ENCODE measurements at regions of chr3 and their contacts with region 1.

Region 1: GRCh38 chr3:100590114-100590839 is 19.1 kb upstream of the ADGRG7 start:
- DNase-seq: peak; percentile 68
- ATAC-seq: peak; percentile 95
- H3K4me3 ChIP-seq: no peak overlapping the region
- H3K27ac ChIP-seq: no peak overlapping the region
- H3K4me1 ChIP-seq: no peaks in the 10 kb centered on the region
- H3K27me3 ChIP-seq: no peaks in the 10 kb centered on the region
- CTCF ChIP-seq: peak; percentile 77 to 91 (median 80); a peak in 5 of 6 replicates
- EP300 ChIP-seq: no peak
- POLR2A ChIP-seq: no peak
- RAD21 ChIP-seq: peak; percentile 95

Region 2: DNA sequence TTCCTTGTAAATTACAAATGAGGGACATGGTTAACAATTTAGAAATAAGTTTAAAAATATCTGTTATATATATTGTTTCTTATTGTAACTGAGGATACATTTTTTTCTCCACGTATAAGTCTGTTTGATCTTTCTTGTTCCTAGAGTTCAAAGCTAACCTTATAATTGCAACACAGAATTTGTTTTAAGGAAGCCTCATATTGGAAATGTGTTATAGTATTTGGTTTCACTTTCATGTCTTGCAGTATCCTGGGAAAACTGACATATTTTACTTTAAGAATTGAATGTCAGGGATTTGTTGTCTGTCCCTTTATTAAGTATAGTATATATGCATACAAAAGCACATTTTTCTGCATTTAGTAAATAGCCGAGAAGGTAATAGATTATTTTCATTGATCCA is 279.3 kb before region 1 on chr3:
- CTCF ChIA-PET with region 1: interaction called, 33 read pairs
- POLR2A ChIA-PET with region 1: no interaction called
- RAD21 ChIA-PET with region 1: interaction called, 32 read pairs
- SMC1A ChIA-PET with region 1: interaction called, 18 read pairs
- in situ Hi-C with region 1: loop called (anchors 5 kb)
- intact Hi-C with region 1: loop called (anchors 1 kb)
- DNase-seq: no peak
- ATAC-seq: no peak
- H3K4me3 ChIP-seq: no peak overlapping the region
- H3K27ac ChIP-seq: no peak overlapping the region
- H3K4me1 ChIP-seq: no peaks in the 10 kb centered on the region
- H3K27me3 ChIP-seq: no peaks in the 10 kb centered on the region
- CTCF ChIP-seq: no peak
- EP300 ChIP-seq: no peak
- POLR2A ChIP-seq: no peak
- RAD21 ChIP-seq: no peak

Region 3: DNA sequence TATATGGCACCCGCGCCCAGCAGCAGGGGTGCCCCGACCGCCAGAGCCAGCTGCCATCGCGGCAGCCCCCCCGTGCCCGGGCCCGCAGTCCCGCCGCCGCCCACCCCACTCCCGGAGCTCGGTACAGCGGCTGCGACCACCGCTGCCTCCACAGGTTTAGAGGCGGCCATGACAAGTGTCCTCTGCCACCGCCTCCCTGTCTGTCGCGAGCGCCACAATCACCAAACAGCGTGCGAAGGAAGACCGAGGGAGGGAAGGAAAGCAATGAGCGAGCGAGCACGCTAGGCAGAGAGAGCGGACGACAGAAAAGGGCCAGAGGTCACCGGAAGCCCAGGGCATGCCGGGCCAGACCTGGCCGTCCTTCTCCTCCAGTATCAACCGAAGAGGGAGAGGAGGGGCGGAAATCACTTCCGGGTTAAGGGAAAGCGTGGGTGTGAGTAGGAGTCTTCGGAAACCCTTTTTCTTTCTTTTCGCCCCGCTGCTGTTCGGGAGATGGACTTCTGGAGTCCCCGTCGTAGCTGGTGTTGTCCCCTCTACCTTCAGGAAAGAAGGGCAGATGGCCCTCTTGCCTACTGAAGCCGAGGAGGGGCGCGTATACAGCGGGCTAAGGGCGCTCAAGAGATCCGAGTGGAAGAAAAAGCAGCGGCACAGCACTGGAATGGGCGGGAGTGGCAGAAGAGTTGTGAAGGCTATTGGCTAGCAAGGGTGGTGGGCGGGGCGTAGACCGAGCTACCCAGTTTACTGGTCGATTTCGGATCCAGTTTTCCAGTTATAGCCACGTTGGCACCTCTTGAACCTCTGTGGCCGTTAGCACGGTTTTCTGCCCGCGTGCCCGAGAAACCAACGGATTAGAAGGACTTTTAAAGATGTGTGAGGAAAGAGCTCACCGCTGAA is 189.2 kb before region 1 on chr3 and contains the starts of genes LNP1 and TOMM70:
- CTCF ChIA-PET with region 1: interaction called, 7 read pairs
- POLR2A ChIA-PET with region 1: interaction called, 3 read pairs
- RAD21 ChIA-PET with region 1: no interaction called
- SMC1A ChIA-PET with region 1: interaction called, 4 read pairs
- in situ Hi-C with region 1: no loop called
- intact Hi-C with region 1: loop called (anchors 5 kb)
- DNase-seq: peak; percentile 85
- ATAC-seq: peak; percentile 90
- H3K4me3 ChIP-seq: peak within 1 kb of the TSS; percentile 73
- H3K27ac ChIP-seq: peak within 1 kb of the TSS; percentile 99
- H3K4me1 ChIP-seq: no peaks in the 10 kb centered on the region
- H3K27me3 ChIP-seq: no peaks in the 10 kb centered on the region
- CTCF ChIP-seq: no peak
- EP300 ChIP-seq: no peak
- POLR2A ChIP-seq: peak; percentile 86
- RAD21 ChIP-seq: no peak
- polyA plus RNA-seq, gene LNP1: 2.1 to 2.5 TPM
- polyA plus RNA-seq, gene TOMM70: 12.7 to 22.6 TPM

Region 4: DNA sequence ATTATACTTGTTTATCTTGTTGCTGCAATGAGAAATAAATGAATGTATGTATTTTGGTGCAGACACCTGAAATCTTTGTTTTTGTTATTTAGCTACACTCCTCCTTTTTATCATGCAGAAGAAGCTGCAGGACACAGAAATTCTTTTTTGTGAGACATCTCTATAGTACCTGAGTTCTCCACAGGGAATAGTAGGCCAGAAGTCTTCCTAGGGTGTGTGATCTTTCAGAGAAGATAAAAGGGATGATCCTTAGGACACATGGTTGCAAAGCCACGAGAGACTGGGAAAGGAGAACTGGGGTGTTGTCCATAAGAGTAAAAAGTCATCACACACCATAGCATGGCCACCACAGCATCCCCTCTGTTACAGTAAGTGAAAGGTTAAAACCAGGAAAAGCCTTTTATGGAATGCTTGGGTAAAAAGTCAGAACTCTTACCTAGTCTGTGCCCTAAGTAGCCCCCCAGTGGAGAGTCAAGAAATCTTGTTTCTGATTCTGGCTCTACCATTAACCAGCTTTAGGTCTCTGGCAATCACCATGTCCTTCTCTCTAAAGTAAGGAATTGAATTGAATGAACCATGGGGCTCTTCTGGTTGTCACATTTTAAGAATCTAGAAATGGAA is 12.8 kb before region 1 on chr3:
- CTCF ChIA-PET with region 1: interaction called, 5 read pairs
- POLR2A ChIA-PET with region 1: no interaction called
- RAD21 ChIA-PET with region 1: interaction called, 5 read pairs
- SMC1A ChIA-PET with region 1: interaction called, 22 read pairs
- in situ Hi-C with region 1: no loop called
- intact Hi-C with region 1: no loop called
- DNase-seq: no peak
- ATAC-seq: no peak
- H3K4me3 ChIP-seq: no peak overlapping the region
- H3K27ac ChIP-seq: no peak overlapping the region
- H3K4me1 ChIP-seq: no peaks in the 10 kb centered on the region
- H3K27me3 ChIP-seq: no peaks in the 10 kb centered on the region
- CTCF ChIP-seq: no peak
- EP300 ChIP-seq: no peak
- POLR2A ChIP-seq: no peak
- RAD21 ChIP-seq: no peak

Region 5: GRCh38 chr3:100634493-100635272 is 44.4 kb after region 1 on chr3:
- CTCF ChIA-PET with region 1: interaction called, 54 read pairs
- POLR2A ChIA-PET with region 1: no interaction called
- RAD21 ChIA-PET with region 1: interaction called, 11 read pairs
- SMC1A ChIA-PET with region 1: interaction called, 32 read pairs
- in situ Hi-C with region 1: no loop called
- intact Hi-C with region 1: loop called (anchors 2 kb)
- DNase-seq: peak; percentile 31
- ATAC-seq: peak; percentile 92
- H3K4me3 ChIP-seq: no peak overlapping the region
- H3K27ac ChIP-seq: no peak overlapping the region
- H3K4me1 ChIP-seq: no peaks in the 10 kb centered on the region
- H3K27me3 ChIP-seq: no peaks in the 10 kb centered on the region
- CTCF ChIP-seq: peak; percentile 12 to 56 (median 17); a peak in 2 of 6 replicates
- EP300 ChIP-seq: no peak
- POLR2A ChIP-seq: no peak
- RAD21 ChIP-seq: peak; percentile 31; the same call in 1 of the 2 replicates

Measured in GM12878 (cell line).